Activated CD8-positive, alpha-beta T cell treated with anti-CD3 and anti-CD28 coated beads, Interleukin-2, amount 10 ng/mL, durations not matched to agents 7 days and 5 days (primary cell): ENCODE measurements at regions of chr22 and their contacts with region 1.

Region 1: DNA sequence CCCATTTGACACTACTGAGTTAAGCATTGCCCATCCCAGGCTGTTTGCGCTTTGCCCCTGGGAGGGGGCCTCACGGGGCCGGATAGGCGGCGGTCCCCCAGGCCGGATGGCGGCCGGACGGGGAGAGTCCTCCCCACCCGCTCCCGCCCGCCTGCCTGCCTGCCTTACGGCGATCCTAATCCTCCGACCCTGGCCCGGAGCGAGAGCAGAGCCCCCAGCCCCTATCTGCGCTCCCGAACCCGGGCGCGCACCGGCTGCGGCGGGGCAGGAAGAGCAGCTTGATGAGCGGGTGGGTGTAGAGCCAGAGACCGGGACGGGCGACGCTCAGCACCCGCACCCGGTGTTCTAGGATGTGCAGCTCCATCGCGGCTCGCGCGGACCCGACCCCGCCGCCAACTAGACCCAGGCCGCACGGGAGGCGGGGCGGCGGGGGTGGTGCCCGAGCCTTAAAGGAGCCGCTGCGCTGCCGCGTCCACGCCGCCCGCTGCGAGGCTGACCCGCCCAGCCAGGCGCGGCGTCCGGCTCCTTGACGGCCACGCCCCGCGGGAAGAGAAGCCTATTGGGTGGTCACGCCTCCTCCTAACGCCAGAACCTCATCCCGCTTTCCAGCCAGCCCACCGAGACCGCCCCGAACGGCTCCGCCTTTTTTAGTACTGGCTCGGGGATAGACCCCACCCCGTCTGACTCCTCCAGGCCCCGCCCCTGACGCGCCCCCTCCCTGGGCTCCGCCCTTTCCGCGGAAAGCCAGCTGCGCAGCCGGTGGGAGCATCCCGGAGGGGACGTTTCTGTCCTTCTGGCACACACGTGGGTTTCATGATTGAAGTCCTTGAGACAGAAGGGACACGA is at the start of gene CASTOR1:
- DNase-seq: peak; percentile 95
- ATAC-seq: peak; percentile 83
- H3K4me3 Mint-ChIP-seq: peak within 1 kb of the TSS; percentile 80
- H3K27ac Mint-ChIP-seq: peak within 1 kb of the TSS; percentile 86
- H3K4me1 Mint-ChIP-seq: peaks cover 60% of the 10 kb centered on the region
- H3K27me3 Mint-ChIP-seq: no peaks in the 10 kb centered on the region
- total RNA-seq, gene CASTOR1: 24.5 to 25.4 TPM

Region 2: DNA sequence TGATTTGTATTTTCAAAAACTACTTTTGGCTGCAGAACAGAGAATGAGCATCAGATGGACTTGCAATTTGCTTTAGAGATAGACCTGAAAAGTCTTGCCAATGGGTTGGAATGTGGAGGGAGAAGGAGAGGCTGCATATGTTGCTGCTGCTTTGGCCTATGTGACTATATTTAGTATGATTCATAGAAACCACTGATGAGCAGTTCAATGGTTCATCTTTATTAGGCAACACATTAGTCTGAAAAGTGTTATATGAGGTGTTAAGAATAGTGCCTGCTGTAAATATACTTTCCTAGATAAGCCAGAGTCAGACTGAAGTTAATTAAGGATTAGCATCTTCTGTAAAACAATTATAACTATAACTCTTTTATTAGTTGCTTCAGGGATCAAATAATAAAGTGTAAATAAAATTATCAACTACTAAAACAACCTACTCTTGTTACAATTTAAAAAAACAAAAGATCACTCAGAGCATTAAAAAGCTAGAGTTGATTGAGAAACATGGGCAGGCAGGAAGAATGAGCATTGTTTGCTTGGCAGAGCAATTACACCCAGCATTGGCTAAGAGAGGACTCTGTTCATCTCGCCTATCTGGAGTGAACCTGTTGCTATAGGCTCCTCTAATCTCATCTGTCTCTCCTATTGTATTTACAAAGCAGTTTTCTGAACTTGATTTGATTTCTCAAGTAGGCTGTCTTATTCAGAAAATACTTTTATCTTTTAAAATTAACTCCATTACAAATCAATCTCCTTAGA is 172.8 kb before region 1 on chr22:
- CTCF ChIA-PET with region 1: interaction called, 13 read pairs
- POLR2A ChIA-PET with region 1: no interaction called
- DNase-seq: no peak
- ATAC-seq: no peak
- H3K4me3 Mint-ChIP-seq: no peak overlapping the region
- H3K27ac Mint-ChIP-seq: no peak overlapping the region
- H3K4me1 Mint-ChIP-seq: peaks cover 41% of the 10 kb centered on the region
- H3K27me3 Mint-ChIP-seq: no peaks in the 10 kb centered on the region

Region 3: GRCh38 chr22:30262917-30263741 is 26.2 kb before region 1 on chr22:
- CTCF ChIA-PET with region 1: interaction called, 60 read pairs
- POLR2A ChIA-PET with region 1: interaction called, 17 read pairs
- DNase-seq: peak; percentile 87
- ATAC-seq: no peak
- H3K4me3 Mint-ChIP-seq: peak overlapping the region; percentile 96
- H3K27ac Mint-ChIP-seq: peak overlapping the region; percentile 97
- H3K4me1 Mint-ChIP-seq: peaks cover 61% of the 10 kb centered on the region
- H3K27me3 Mint-ChIP-seq: no peaks in the 10 kb centered on the region

Region 4: DNA sequence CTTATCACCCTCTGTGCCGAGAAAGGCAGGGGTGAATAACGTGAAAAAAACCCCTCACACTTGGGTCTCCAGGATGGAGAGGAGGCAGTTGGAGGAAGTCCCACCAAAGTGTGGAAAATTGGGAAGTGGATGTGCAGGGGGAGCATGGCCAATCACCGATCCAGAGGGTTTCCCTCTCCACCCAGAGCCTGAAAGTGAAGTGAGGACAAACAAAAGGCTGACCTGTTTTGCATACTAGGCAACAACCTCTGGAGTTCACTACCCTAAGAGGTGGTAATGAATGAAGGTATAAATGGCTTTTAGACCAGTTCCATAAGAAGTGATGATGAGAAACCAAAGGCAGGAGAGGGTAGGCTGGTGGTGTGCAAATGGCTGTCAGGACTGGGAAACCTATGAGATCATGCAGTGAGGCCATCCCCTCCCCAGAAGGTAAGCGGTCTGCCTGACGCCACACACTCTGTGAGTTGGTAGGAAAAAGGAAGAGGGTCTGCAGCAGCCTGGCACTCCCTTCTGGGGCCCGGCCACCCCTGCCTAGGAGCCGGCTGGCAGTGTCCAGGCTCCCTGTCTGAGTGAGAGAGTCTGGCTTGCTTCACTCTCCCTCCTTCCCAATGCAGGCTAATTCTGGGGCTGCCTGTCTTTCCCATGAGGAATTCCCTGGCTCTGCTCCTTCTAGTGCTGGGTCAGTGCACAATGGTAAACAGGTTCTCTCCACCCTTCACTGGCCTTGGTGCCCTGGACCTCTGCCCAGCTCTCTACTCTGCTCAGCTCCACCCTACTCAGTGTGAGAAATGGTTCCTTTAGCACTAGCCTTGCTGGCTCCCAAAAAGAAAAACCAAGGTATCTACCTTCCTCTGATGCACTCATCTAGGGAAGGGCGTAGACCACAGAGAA is 21.8 kb after region 1 on chr22:
- CTCF ChIA-PET with region 1: interaction called, 184 read pairs
- POLR2A ChIA-PET with region 1: interaction called, 117 read pairs
- DNase-seq: no peak
- ATAC-seq: no peak
- H3K4me3 Mint-ChIP-seq: no peak overlapping the region
- H3K27ac Mint-ChIP-seq: peak overlapping the region; percentile 79
- H3K4me1 Mint-ChIP-seq: peaks cover 97% of the 10 kb centered on the region
- H3K27me3 Mint-ChIP-seq: no peaks in the 10 kb centered on the region

Region 5: GRCh38 chr22:30356449-30357235 is 67.3 kb after region 1 on chr22 and contains the starts of genes CCDC157 and SF3A1:
- CTCF ChIA-PET with region 1: interaction called, 49 read pairs
- POLR2A ChIA-PET with region 1: interaction called, 36 read pairs
- DNase-seq: peak; percentile 93
- ATAC-seq: peak; percentile 90
- H3K4me3 Mint-ChIP-seq: peak within 1 kb of the TSS; percentile 97
- H3K27ac Mint-ChIP-seq: peak within 1 kb of the TSS; percentile 91
- H3K4me1 Mint-ChIP-seq: peaks cover 46% of the 10 kb centered on the region
- H3K27me3 Mint-ChIP-seq: no peaks in the 10 kb centered on the region
- total RNA-seq, gene CCDC157: 4.3 to 5.0 TPM
- total RNA-seq, gene SF3A1: 211 to 246 TPM

Region 6: GRCh38 chr22:30386960-30387827 is 97.8 kb after region 1 on chr22 and contains the start of gene RNF215:
- CTCF ChIA-PET with region 1: interaction called, 346 read pairs
- POLR2A ChIA-PET with region 1: interaction called, 32 read pairs
- DNase-seq: peak; percentile 85
- ATAC-seq: peak; percentile 83
- H3K4me3 Mint-ChIP-seq: peak within 1 kb of the TSS; percentile 80
- H3K27ac Mint-ChIP-seq: peak within 1 kb of the TSS; percentile 78
- H3K4me1 Mint-ChIP-seq: peaks cover 32% of the 10 kb centered on the region
- H3K27me3 Mint-ChIP-seq: no peaks in the 10 kb centered on the region
- total RNA-seq, gene RNF215: 12.0 to 14.6 TPM